Pancreas (tissue), 10 donors: ENCODE measurements at regions of chr14 and their contacts with region 1.

Region 1: GRCh38 chr14:102917469-102918211 is 4.8 kb upstream of the AMN start:
- DNase-seq: peak in 2 of 6 donors; percentile 39 to 58
- ATAC-seq: peak in 3 of 4 donors; percentile 51 to 66 (median 54)
- H3K4me3 ChIP-seq: no peak overlapping the region
- H3K27ac ChIP-seq: no peak overlapping the region
- H3K4me1 ChIP-seq: peaks cover 0 to 1% (median 0%) of the 10 kb centered on the region in 3 donors
- H3K27me3 ChIP-seq: no peaks in the 10 kb centered on the region
- CTCF ChIP-seq: peak in 3 of 4 donors; percentile 28 to 32 (median 32)

Region 2: GRCh38 chr14:102694530-102695166 is 223.0 kb before region 1 on chr14:
- intact Hi-C with region 1: loop called in 1 of 3 experiments (anchors 10 kb)
- DNase-seq: peak in 3 of 6 donors; percentile 34 to 67 (median 50)
- ATAC-seq: peak; percentile 80 to 87 (median 86)
- H3K4me3 ChIP-seq: no peak overlapping the region
- H3K27ac ChIP-seq: no peak overlapping the region
- H3K4me1 ChIP-seq: peaks cover 16 to 20% (median 18%) of the 10 kb centered on the region in 3 donors
- H3K27me3 ChIP-seq: no peaks in the 10 kb centered on the region
- CTCF ChIP-seq: peak; percentile 31 to 66 (median 44)